ENCODE measurements at regions of chr7 and their contacts with region 1.

Region 1: GRCh38 chr7:43942997-43943704 is 16.9 kb downstream of the UBE2D4 start:
- DNase-seq: no peak
- ATAC-seq: peak; percentile 58
- H3K4me3 Mint-ChIP-seq: no peak overlapping the region
- H3K27ac Mint-ChIP-seq: no peak overlapping the region
- H3K4me1 Mint-ChIP-seq: peaks cover 3% of the 10 kb centered on the region
- H3K27me3 Mint-ChIP-seq: no peaks in the 10 kb centered on the region
- CTCF ChIP-seq: no peak

Region 2: GRCh38 chr7:43954524-43955228 is 11.5 kb after region 1 on chr7:
- CTCF ChIA-PET with region 1: interaction called, 14 read pairs
- POLR2A ChIA-PET with region 1: no interaction called
- DNase-seq: peak; percentile 45
- ATAC-seq: peak; percentile 98
- H3K4me3 Mint-ChIP-seq: no peak overlapping the region
- H3K27ac Mint-ChIP-seq: 0 out of 2 replicates have a peak overlapping the region, but pooled peaks have one; percentile 1
- H3K4me1 Mint-ChIP-seq: peaks cover 9% of the 10 kb centered on the region
- H3K27me3 Mint-ChIP-seq: no peaks in the 10 kb centered on the region; the same call in 1 of the 2 replicates
- CTCF ChIP-seq: no peak

Region 3: DNA sequence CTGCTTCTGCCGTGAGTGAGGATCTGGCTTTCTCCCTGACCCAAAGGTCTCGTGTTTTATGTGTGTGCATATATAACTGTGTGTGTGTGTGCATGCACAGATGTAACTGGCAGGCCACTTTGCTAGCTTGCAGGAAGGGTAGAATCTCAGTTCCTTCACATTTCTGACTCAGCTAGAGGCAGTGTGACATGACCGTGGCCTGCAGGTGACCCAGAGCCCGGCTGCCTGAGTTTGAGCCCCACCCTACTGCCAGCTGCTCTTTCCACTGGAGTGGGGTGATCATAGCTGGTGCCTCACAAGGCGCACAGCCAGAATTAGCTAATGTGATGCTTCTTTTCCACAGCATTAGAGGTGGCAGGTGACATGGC is 207.3 kb after region 1 on chr7:
- CTCF ChIA-PET with region 1: no interaction called
- POLR2A ChIA-PET with region 1: no interaction called
- DNase-seq: no peak
- ATAC-seq: no peak
- H3K4me3 Mint-ChIP-seq: no peak overlapping the region
- H3K27ac Mint-ChIP-seq: no peak overlapping the region
- H3K4me1 Mint-ChIP-seq: peaks cover 16% of the 10 kb centered on the region
- H3K27me3 Mint-ChIP-seq: peaks cover 17% of the 10 kb centered on the region
- CTCF ChIP-seq: no peak

Measured in WTC11 (cell line).